ENCODE measurements at regions of chr3 and their contacts with region 1.

Region 1: GRCh38 chr3:43024181-43024885 is 45.2 kb downstream of the GASK1A start:
- DNase-seq: peak in 13 of 14 experiments; percentile 20 to 79 (median 52)
- ATAC-seq: peak; percentile 92
- H3K4me3 ChIP-seq: peak overlapping the region; percentile 34
- H3K4me3 Mint-ChIP-seq: peak overlapping the region; percentile 78
- H3K27ac ChIP-seq: peak overlapping the region; percentile 53 to 54
- H3K27ac Mint-ChIP-seq: no peak overlapping the region
- H3K4me1 ChIP-seq: peaks cover 67% of the 10 kb centered on the region
- H3K4me1 Mint-ChIP-seq: peaks cover 1% of the 10 kb centered on the region
- H3K27me3 ChIP-seq: no peaks in the 10 kb centered on the region
- H3K27me3 Mint-ChIP-seq: no peaks in the 10 kb centered on the region
- CTCF ChIP-seq: no peak

Region 2: GRCh38 chr3:43006825-43007224 is 17.5 kb before region 1 on chr3:
- CTCF ChIA-PET with region 1: no interaction called
- POLR2A ChIA-PET with region 1: interaction called, 10 read pairs
- intact Hi-C with region 1: no loop called
- DNase-seq: no peak
- ATAC-seq: no peak
- H3K4me3 ChIP-seq: no peak overlapping the region
- H3K4me3 Mint-ChIP-seq: no peak overlapping the region
- H3K27ac ChIP-seq: no peak overlapping the region
- H3K27ac Mint-ChIP-seq: no peak overlapping the region
- H3K4me1 ChIP-seq: no peaks in the 10 kb centered on the region
- H3K4me1 Mint-ChIP-seq: peaks cover 29% of the 10 kb centered on the region
- H3K27me3 ChIP-seq: no peaks in the 10 kb centered on the region
- H3K27me3 Mint-ChIP-seq: no peaks in the 10 kb centered on the region
- CTCF ChIP-seq: no peak